Heart right ventricle (tissue), 16 donors: ENCODE measurements at regions of chr14 and their contacts with region 1.

Region 1: GRCh38 chr14:68824517-68825347 is 31.9 kb upstream of the ZFP36L1 start:
- DNase-seq: peak; percentile 83 to 88
- ATAC-seq: peak; percentile 93 to 96 (median 95)
- H3K4me3 ChIP-seq: no peak overlapping the region
- H3K27ac ChIP-seq: no peak overlapping the region
- H3K4me1 ChIP-seq: peaks cover 0 to 17% (median 4%) of the 10 kb centered on the region in 9 donors
- H3K27me3 ChIP-seq: no peaks in the 10 kb centered on the region
- CTCF ChIP-seq: peak; percentile 76 to 98 (median 92)

Region 2: GRCh38 chr14:67837011-67837624 is 987.6 kb before region 1 on chr14:
- intact Hi-C with region 1: loop called in 6 of 10 experiments (anchors 5 to 10 kb)
- DNase-seq: peak in 1 of 2 donors; percentile 75
- ATAC-seq: peak in 1 of 8 donors; percentile 42
- H3K4me3 ChIP-seq: no peak overlapping the region
- H3K27ac ChIP-seq: no peak overlapping the region
- H3K4me1 ChIP-seq: no peaks in the 10 kb centered on the region
- H3K27me3 ChIP-seq: no peaks in the 10 kb centered on the region
- CTCF ChIP-seq: peak; percentile 4 to 67 (median 56)

Region 3: GRCh38 chr14:67846029-67846610 is 978.6 kb before region 1 on chr14:
- intact Hi-C with region 1: loop called in 1 of 10 experiments (anchors 10 kb)
- DNase-seq: no peak
- ATAC-seq: peak in 1 of 8 donors; percentile 31
- H3K4me3 ChIP-seq: no peak overlapping the region
- H3K27ac ChIP-seq: no peak overlapping the region
- H3K4me1 ChIP-seq: no peaks in the 10 kb centered on the region
- H3K27me3 ChIP-seq: no peaks in the 10 kb centered on the region
- CTCF ChIP-seq: no peak

Region 4: GRCh38 chr14:67883717-67884116 is 941.0 kb before region 1 on chr14:
- intact Hi-C with region 1: loop called in 3 of 10 experiments (anchors 5 kb)
- DNase-seq: no peak
- ATAC-seq: no peak
- H3K4me3 ChIP-seq: no peak overlapping the region
- H3K27ac ChIP-seq: peak overlapping the region in 2 of 10 donors; percentile 4 to 24
- H3K4me1 ChIP-seq: peaks cover 0 to 19% (median 7%) of the 10 kb centered on the region in 9 donors
- H3K27me3 ChIP-seq: no peaks in the 10 kb centered on the region
- CTCF ChIP-seq: peak in 7 of 9 donors; percentile 19 to 57 (median 45)

Region 5: GRCh38 chr14:67934008-67934481 is 890.7 kb before region 1 on chr14:
- intact Hi-C with region 1: loop called in 1 of 10 experiments (anchors 10 kb)
- DNase-seq: peak in 1 of 2 donors; percentile 26
- ATAC-seq: peak in 7 of 8 donors; percentile 87 to 94 (median 92)
- H3K4me3 ChIP-seq: no peak overlapping the region
- H3K27ac ChIP-seq: peak overlapping the region in 8 of 10 donors; percentile 9 to 62 (median 38)
- H3K4me1 ChIP-seq: peaks cover 3 to 24% (median 11%) of the 10 kb centered on the region in 9 donors
- H3K27me3 ChIP-seq: no peaks in the 10 kb centered on the region
- CTCF ChIP-seq: peak; percentile 40 to 79 (median 66)

Region 6: GRCh38 chr14:68703093-68703492 is 121.6 kb before region 1 on chr14:
- intact Hi-C with region 1: no loop called
- DNase-seq: no peak
- ATAC-seq: peak in 2 of 8 donors; percentile 38 to 69
- H3K4me3 ChIP-seq: no peak overlapping the region
- H3K27ac ChIP-seq: peak overlapping the region in 1 of 10 donors; percentile 26
- H3K4me1 ChIP-seq: peaks cover 0 to 36% (median 13%) of the 10 kb centered on the region in 9 donors
- H3K27me3 ChIP-seq: no peaks in the 10 kb centered on the region
- CTCF ChIP-seq: no peak

Region 7: GRCh38 chr14:68921666-68922065 is 96.9 kb after region 1 on chr14:
- intact Hi-C with region 1: no loop called
- DNase-seq: no peak
- ATAC-seq: no peak
- H3K4me3 ChIP-seq: no peak overlapping the region
- H3K27ac ChIP-seq: peak overlapping the region in 8 of 10 donors; percentile 16 to 86 (median 64)
- H3K4me1 ChIP-seq: peaks cover 20 to 53% (median 41%) of the 10 kb centered on the region in 9 donors
- H3K27me3 ChIP-seq: no peaks in the 10 kb centered on the region
- CTCF ChIP-seq: peak in 2 of 9 donors; percentile 3 to 20